OCI-LY7 (cell line): ENCODE measurements at regions of chr4 and their contacts with region 1.

Region 1: GRCh38 chr4:2468445-2469192 is at the start of gene RNF4:
- DNase-seq: peak; percentile 98
- H3K4me3 ChIP-seq: peak within 1 kb of the TSS; percentile 92
- H3K27ac ChIP-seq: peak within 1 kb of the TSS; percentile 92
- H3K4me1 ChIP-seq: peaks cover 24% of the 10 kb centered on the region
- CTCF ChIP-seq: no peak
- total RNA-seq, gene RNF4: 63.6 and 65.0 TPM in 2 replicates

Region 2: DNA sequence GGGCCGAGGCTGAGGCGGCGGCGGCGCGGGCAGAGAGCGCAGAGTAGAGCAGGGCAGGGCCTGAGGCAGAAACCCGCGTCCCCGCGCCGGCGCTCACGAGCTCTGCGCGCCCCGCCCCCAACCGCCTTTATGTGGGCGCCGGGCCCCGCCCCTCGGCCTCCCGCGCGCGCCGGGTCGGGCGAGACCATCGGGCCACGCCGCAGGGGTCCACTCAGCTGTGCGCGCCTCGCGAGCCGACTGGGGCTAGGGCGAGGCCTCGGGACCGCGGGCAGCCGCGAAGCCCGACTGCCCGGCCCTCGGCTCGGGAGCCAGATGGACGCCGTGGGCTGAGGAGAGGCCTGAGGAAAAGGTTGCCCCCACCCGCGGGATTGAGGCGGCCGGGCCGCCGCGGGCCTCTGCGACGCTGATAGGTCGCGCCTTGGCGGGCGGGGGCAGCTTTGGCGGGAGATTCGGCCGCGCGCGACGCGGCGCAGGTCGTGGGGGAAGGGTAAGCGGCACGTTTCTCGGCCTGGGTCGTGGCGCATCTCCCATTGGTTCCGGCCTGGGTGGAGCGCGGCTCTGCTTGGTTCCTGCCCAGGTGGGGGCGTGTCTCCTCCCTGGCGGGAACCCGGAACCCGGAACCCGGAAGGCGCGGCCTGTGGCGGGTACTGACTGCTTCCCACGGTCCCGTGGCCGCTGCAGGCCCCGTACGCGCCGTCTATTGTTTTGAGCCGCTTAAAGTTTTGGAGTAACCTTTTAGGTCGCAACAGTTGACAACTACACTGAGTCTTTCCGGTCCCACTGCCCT is 756.2 kb before region 1 on chr4 and contains the start of gene SLBP:
- CTCF ChIA-PET with region 1: no interaction called
- POLR2A ChIA-PET with region 1: no interaction called
- intact Hi-C with region 1: loop called (anchors 10 kb)
- DNase-seq: peak; percentile 98
- H3K4me3 ChIP-seq: peak within 1 kb of the TSS; percentile 86
- H3K27ac ChIP-seq: peak within 1 kb of the TSS; percentile 85
- H3K4me1 ChIP-seq: peaks cover 62% of the 10 kb centered on the region
- CTCF ChIP-seq: no peak
- total RNA-seq, gene SLBP: 191 and 196 TPM in 2 replicates

Region 3: GRCh38 chr4:2320152-2320551 is 148.5 kb before region 1 on chr4:
- CTCF ChIA-PET with region 1: no interaction called
- POLR2A ChIA-PET with region 1: no interaction called
- intact Hi-C with region 1: no loop called
- DNase-seq: no peak
- H3K4me3 ChIP-seq: no peak overlapping the region
- H3K27ac ChIP-seq: no peak overlapping the region
- H3K4me1 ChIP-seq: no peaks in the 10 kb centered on the region
- CTCF ChIP-seq: no peak

Region 4: GRCh38 chr4:2412885-2413716 is 55.5 kb before region 1 on chr4:
- CTCF ChIA-PET with region 1: no interaction called
- POLR2A ChIA-PET with region 1: no interaction called
- intact Hi-C with region 1: no loop called
- DNase-seq: peak; percentile 39
- H3K4me3 ChIP-seq: peak overlapping the region; percentile 6
- H3K27ac ChIP-seq: no peak overlapping the region
- H3K4me1 ChIP-seq: peaks cover 15% of the 10 kb centered on the region
- CTCF ChIP-seq: 0 out of 2 replicates have a peak, but pooled peaks have one; percentile 19

Region 5: GRCh38 chr4:2441393-2442174 is 27.0 kb before region 1 on chr4:
- CTCF ChIA-PET with region 1: interaction called, 10 read pairs
- POLR2A ChIA-PET with region 1: no interaction called
- intact Hi-C with region 1: no loop called
- DNase-seq: peak; percentile 90
- H3K4me3 ChIP-seq: no peak overlapping the region
- H3K27ac ChIP-seq: no peak overlapping the region
- H3K4me1 ChIP-seq: peaks cover 8% of the 10 kb centered on the region
- CTCF ChIP-seq: peak; percentile 99

Region 6: GRCh38 chr4:2536193-2537010 is 67.8 kb after region 1 on chr4 and contains the start of gene FAM193A:
- CTCF ChIA-PET with region 1: interaction called, 3 read pairs
- POLR2A ChIA-PET with region 1: interaction called, 11 read pairs
- intact Hi-C with region 1: loop called (anchors 1 kb)
- DNase-seq: peak; percentile 100
- H3K4me3 ChIP-seq: peak within 1 kb of the TSS; percentile 95
- H3K27ac ChIP-seq: peak within 1 kb of the TSS; percentile 68
- H3K4me1 ChIP-seq: peaks cover 15% of the 10 kb centered on the region
- CTCF ChIP-seq: no peak
- total RNA-seq, gene FAM193A: 17.1 and 17.8 TPM in 2 replicates

Region 7: GRCh38 chr4:2963175-2963965 is 494.8 kb after region 1 on chr4 and contains the starts of genes GRK4 and NOP14:
- CTCF ChIA-PET with region 1: no interaction called
- POLR2A ChIA-PET with region 1: no interaction called
- intact Hi-C with region 1: loop called (anchors 10 kb)
- DNase-seq: peak; percentile 100
- H3K4me3 ChIP-seq: peak within 1 kb of the TSS; percentile 83
- H3K27ac ChIP-seq: peak within 1 kb of the TSS; percentile 69
- H3K4me1 ChIP-seq: peaks cover 22% of the 10 kb centered on the region
- CTCF ChIP-seq: peak; percentile 39; the same call in 1 of the 2 replicates
- total RNA-seq, gene GRK4: 5.3 and 6.5 TPM in 2 replicates
- total RNA-seq, gene NOP14: 31.7 and 35.9 TPM in 2 replicates